ENCODE measurements at regions of chr1 and their contacts with region 1.

Region 1: DNA sequence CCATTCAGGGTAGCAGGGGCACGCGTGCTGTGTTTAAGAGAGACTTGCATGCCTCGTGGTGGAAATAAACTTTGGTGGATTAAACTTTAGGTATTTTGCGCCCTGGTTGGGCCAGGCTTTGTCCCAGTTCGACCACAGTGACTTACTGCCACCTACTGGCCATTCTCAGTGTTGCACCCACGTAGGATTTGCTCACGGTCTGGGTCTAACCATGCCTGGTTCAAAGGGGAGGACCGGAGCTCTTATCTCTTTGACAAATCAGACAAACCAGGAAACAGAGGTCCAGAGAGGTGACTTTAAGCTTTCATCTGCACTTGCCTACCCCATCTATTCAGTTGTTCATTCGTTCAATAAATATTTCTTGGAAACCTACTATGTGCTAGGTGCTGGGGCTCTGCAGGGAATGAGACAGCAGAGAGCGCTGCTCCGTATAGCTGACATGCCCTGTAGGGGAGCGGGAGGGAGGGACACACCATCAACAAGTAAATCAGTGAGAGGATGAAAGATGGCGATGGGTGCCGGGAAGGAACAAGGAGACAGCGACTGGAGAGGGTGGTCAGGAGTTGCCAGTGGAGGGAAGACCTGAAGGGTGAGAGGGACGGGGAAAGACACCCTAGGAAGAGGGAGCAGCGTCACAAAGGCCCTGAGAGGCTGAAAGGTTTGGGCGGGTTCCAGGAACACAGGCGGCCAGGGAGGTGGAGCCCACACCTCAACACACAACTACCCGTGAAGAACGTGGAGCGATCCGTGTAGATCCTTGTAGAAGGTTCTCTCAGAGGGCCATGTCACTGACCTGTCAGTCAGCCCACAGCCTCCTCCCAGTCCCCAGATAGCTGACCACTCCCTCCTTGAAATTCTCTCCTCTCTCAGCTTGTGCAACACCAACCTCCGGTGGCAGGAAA is 27.2 kb upstream of the TINAGL1 start:
- DNase-seq: peak; percentile 91 to 92
- H3K4me3 ChIP-seq: peak overlapping the region in 1 of 3 donors; percentile 1
- H3K27ac ChIP-seq: peak overlapping the region; percentile 54 to 70 (median 58)
- H3K4me1 ChIP-seq: peaks cover 5 to 12% of the 10 kb centered on the region in 2 donors
- H3K27me3 ChIP-seq: no peaks in the 10 kb centered on the region
- CTCF ChIP-seq: peak; percentile 92 to 96 (median 94)
- POLR2A ChIP-seq: no peak

Region 2: DNA sequence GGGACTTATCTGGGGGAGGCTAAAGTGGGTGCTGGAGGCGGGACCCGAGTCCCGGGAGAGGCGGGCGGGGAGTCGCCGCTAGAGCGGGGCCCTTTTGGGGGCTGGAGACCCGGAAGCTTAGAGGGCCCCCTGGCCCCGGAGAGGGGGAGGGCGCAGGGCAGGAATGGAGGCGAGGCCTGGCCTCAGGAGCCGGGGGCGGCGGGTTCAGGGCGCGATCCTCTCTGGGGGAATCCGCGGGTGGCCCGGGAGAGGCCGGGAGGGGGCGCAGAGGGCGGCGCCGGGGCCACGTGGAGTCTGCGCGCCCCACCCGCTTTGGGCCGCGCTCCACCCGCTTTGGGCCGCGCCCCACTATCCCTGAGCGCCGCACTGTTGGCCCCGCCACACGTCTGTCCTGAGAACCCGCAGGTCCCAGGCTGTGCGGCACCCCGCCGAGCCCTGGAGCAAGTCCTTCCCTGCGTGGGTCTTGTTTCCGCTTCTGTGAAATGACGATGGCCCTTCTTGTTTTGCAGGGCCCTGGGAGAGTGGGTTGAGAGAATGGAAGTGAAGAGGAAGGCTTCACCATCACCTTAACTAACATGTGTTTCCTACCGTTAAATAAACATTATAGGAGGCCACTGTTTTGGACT is 393.8 kb before region 1 on chr1:
- intact Hi-C with region 1: no loop called
- DNase-seq: peak; percentile 58 to 72
- H3K4me3 ChIP-seq: peak overlapping the region in 2 of 3 donors; percentile 62 to 67
- H3K27ac ChIP-seq: peak overlapping the region; percentile 63 to 85 (median 77)
- H3K4me1 ChIP-seq: peaks cover 3 to 15% of the 10 kb centered on the region in 2 donors
- H3K27me3 ChIP-seq: no peaks in the 10 kb centered on the region
- CTCF ChIP-seq: peak in 3 of 6 experiments; percentile 8 to 36 (median 27)
- POLR2A ChIP-seq: no peak

Region 3: GRCh38 chr1:31182352-31182751 is 366.8 kb before region 1 on chr1:
- intact Hi-C with region 1: loop called (anchors 10 kb)
- DNase-seq: peak; percentile 76 to 80
- H3K4me3 ChIP-seq: peak overlapping the region in 1 of 3 donors; percentile 2
- H3K27ac ChIP-seq: no peak overlapping the region
- H3K4me1 ChIP-seq: peaks cover 7 to 14% of the 10 kb centered on the region in 2 donors
- H3K27me3 ChIP-seq: no peaks in the 10 kb centered on the region
- CTCF ChIP-seq: peak in 1 of 6 experiments; percentile 4
- POLR2A ChIP-seq: no peak

Region 4: GRCh38 chr1:31394628-31395193 is 154.4 kb before region 1 on chr1:
- intact Hi-C with region 1: loop called (anchors 10 kb)
- DNase-seq: peak; percentile 94
- H3K4me3 ChIP-seq: no peak overlapping the region
- H3K27ac ChIP-seq: peak overlapping the region; percentile 17 to 37 (median 35)
- H3K4me1 ChIP-seq: peaks cover 0 to 8% of the 10 kb centered on the region in 2 donors
- H3K27me3 ChIP-seq: no peaks in the 10 kb centered on the region
- CTCF ChIP-seq: peak; percentile 67 to 89 (median 82)
- POLR2A ChIP-seq: no peak

Measured in thyroid gland (tissue), 4 donors.